Activated CD4-positive, alpha-beta T cell treated with anti-CD3 and anti-CD28 coated beads, Interleukin-2, amount 10 ng/mL, durations not matched to agents 7 days and 5 days (primary cell): ENCODE measurements at regions of chr12 and their contacts with region 1.

Region 1: GRCh38 chr12:31272607-31273225 is 53.2 kb downstream of the SINHCAF start:
- DNase-seq: no peak
- H3K4me3 Mint-ChIP-seq: no peak overlapping the region
- H3K27ac Mint-ChIP-seq: no peak overlapping the region
- H3K4me1 Mint-ChIP-seq: peaks cover 3% of the 10 kb centered on the region
- H3K27me3 Mint-ChIP-seq: no peaks in the 10 kb centered on the region

Region 2: DNA sequence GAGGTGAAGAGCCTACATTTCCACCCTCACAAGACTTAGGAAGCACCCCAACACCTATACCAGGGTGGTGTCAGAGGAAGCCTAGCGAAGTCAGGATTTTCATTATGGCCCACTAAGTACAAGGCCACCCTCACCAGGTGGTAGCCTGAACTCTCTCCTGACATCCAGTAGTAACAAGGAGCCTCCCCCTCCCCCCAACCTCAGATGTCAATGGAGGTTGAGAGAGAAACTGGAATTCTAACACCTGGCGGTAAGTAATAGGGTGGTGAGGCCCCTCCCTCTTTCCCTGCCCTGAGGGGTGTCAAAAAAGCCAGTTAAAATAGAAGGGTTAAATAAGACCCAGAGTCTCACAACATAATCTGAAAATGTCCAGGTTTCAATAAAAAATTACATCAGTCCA is 15.7 kb after region 1 on chr12:
- CTCF ChIA-PET with region 1: interaction called, 11 read pairs
- POLR2A ChIA-PET with region 1: no interaction called
- DNase-seq: no peak
- H3K4me3 Mint-ChIP-seq: no peak overlapping the region
- H3K27ac Mint-ChIP-seq: peak overlapping the region; percentile 50
- H3K4me1 Mint-ChIP-seq: peaks cover 2% of the 10 kb centered on the region
- H3K27me3 Mint-ChIP-seq: no peaks in the 10 kb centered on the region

Region 3: DNA sequence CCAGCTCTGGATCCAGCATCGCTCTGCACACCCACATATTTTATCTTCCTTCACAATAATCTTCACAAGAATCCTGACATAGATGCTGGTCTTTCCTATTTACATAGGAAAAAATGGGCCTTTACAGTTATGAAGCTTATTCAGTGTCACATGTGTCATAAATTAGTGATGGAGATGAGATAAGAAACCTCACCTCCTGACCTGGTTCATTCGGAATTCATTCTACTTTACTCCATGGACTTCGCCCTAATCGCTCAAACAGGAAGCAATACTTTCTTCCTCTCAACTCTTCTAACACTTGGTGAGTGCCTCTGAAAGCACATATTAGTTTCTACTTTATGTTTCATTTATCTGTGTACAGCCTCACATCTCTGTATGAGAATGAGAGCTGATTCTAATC is 65.2 kb after region 1 on chr12:
- CTCF ChIA-PET with region 1: no interaction called
- POLR2A ChIA-PET with region 1: no interaction called
- DNase-seq: no peak
- H3K4me3 Mint-ChIP-seq: no peak overlapping the region
- H3K27ac Mint-ChIP-seq: no peak overlapping the region
- H3K4me1 Mint-ChIP-seq: peaks cover 3% of the 10 kb centered on the region
- H3K27me3 Mint-ChIP-seq: peaks cover 2% of the 10 kb centered on the region

Region 4: DNA sequence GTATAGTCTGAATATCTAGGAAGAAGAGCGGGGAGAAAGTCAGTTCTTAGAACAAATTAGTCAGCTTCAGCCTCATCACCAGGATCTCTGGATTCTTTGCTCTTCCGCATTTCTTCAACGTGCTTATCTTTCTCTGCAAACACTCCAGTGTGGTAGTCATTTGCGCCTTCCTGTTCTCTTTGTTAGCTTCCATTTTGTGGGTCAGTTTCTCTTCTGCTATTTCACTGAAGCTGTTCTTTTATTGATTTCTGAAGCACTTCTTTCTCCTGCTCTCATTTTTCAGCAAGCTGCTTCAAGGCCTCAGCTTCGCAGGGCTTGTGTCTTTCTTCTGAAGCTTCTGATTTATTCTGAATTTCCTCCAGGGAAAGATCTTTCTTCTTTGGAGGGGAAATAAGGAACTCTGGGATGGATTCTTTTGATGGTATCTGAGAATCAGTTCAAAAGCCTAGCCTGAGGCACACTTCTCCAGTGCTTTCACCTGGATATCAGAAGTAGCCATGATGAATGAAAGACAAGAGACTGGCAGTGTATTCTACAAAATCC is 442.6 kb after region 1 on chr12:
- CTCF ChIA-PET with region 1: no interaction called
- POLR2A ChIA-PET with region 1: interaction called, 10 read pairs
- DNase-seq: no peak
- H3K4me3 Mint-ChIP-seq: no peak overlapping the region
- H3K27ac Mint-ChIP-seq: no peak overlapping the region
- H3K4me1 Mint-ChIP-seq: peaks cover 5% of the 10 kb centered on the region
- H3K27me3 Mint-ChIP-seq: no peaks in the 10 kb centered on the region